H1 (cell line): ENCODE measurements at regions of chr15 and their contacts with region 1.

Region 1: DNA sequence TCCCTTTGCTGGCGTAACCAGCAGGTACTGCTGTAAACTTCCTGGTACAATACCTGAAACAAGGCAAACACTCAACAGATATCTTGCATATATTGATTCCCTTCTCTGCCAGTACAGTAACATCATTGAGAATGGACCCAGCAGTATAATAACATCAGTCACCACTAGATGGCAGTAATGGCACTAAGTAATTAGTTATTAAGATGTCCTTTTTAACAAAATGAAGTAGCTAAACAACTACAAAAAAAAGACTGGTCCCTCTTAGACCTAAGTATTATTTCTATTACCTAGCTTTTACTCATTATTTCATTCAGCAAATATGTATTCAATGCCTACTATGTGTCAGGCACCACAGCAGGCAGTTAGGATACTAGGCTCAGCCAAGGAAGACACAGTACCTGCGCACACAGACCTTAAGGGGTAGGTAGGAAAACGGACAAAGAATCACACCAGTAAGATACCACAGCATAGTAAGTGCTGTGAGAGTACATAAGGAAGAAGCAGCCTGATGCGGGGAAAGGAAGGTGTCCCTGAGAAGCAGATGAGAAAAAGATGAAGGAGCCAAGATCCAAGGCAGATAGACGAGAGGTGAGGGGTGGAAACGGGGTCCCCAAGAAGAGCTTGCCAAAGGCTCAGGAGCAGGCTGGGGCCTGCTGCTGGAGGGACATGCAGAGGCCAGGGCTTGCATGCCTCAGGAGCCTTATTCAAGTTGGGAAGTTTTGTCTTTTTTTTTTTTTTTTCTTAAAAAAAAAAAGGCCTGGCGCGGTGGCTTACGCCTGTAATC is 102.8 kb upstream of the CHD2 start:
- DNase-seq: no peak
- H3K4me3 ChIP-seq: no peak overlapping the region
- H3K27ac ChIP-seq: no peak overlapping the region
- H3K4me1 ChIP-seq: no peaks in the 10 kb centered on the region; a peak in 1 of 7 replicates
- H3K27me3 ChIP-seq: no peaks in the 10 kb centered on the region
- CTCF ChIP-seq: peak in 2 of 3 experiments; percentile 39 to 69; a peak in 2 of 4 replicates
- EP300 ChIP-seq: no peak
- POLR2A ChIP-seq: no peak
- RAD21 ChIP-seq: peak; percentile 59 to 62

Region 2: GRCh38 chr15:92429378-92430068 is 367.8 kb before region 1 on chr15:
- CTCF ChIA-PET with region 1: no interaction called
- POLR2A ChIA-PET with region 1: no interaction called
- DNase-seq: peak in 1 of 2 experiments; percentile 52
- H3K4me3 ChIP-seq: no peak overlapping the region
- H3K27ac ChIP-seq: no peak overlapping the region
- H3K4me1 ChIP-seq: peaks cover 0 to 12% (median 3%) of the 10 kb centered on the region in 4 experiments; a peak in 4 of 7 replicates
- H3K27me3 ChIP-seq: no peaks in the 10 kb centered on the region
- CTCF ChIP-seq: no peak
- EP300 ChIP-seq: no peak
- POLR2A ChIP-seq: no peak
- RAD21 ChIP-seq: no peak

Region 3: DNA sequence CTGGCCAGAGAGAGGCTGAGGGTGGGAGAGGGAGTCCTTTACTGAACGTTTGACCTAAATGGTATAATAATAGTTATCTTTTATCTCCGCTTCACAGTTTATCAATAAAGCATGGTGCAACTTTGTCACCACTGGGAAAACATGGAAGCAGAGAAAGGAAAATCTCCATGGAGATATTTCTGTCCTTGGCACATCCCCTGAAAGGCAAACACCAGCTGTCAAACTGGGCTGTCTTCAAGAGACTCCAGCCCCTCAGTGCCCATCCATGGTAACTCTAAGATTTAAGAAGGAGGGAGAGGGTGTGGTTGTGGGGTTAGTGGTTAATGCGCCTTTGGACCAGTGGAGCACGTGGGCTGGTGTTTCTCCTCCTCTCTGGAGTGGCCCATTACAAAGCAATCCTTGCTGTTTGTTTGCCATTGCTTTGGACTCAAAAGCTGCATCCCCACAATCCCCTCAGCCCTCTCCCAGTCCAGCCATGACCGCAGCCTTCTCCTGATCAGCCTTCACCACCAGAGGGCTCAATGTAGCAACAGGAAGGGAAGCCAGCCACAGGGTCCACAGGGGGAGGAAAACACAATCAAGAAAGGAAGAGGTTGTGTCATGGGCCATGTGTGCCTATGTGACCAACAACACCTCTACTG is 103.5 kb before region 1 on chr15:
- CTCF ChIA-PET with region 1: no interaction called
- POLR2A ChIA-PET with region 1: no interaction called
- DNase-seq: peak in 1 of 2 experiments; percentile 80
- H3K4me3 ChIP-seq: no peak overlapping the region
- H3K27ac ChIP-seq: no peak overlapping the region
- H3K4me1 ChIP-seq: no peaks in the 10 kb centered on the region
- H3K27me3 ChIP-seq: no peaks in the 10 kb centered on the region
- CTCF ChIP-seq: peak; percentile 79 to 86 (median 86)
- EP300 ChIP-seq: no peak
- POLR2A ChIP-seq: no peak
- RAD21 ChIP-seq: peak; percentile 69 to 82

Region 4: GRCh38 chr15:92714477-92715401 is 82.6 kb before region 1 on chr15:
- CTCF ChIA-PET with region 1: interaction called, 14 read pairs
- POLR2A ChIA-PET with region 1: no interaction called
- DNase-seq: peak in 1 of 2 experiments; percentile 92
- H3K4me3 ChIP-seq: peak overlapping the region; percentile 51 to 72 (median 62)
- H3K27ac ChIP-seq: no peak overlapping the region
- H3K4me1 ChIP-seq: peaks cover 0 to 5% (median 3%) of the 10 kb centered on the region in 4 experiments; a peak in 4 of 7 replicates
- H3K27me3 ChIP-seq: peaks cover 0 to 31% (median 14%) of the 10 kb centered on the region in 4 experiments; a peak in 6 of 7 replicates
- CTCF ChIP-seq: peak; percentile 52 to 83 (median 75)
- EP300 ChIP-seq: no peak
- POLR2A ChIP-seq: peak in 1 of 2 experiments; percentile 38; a peak in 2 of 3 replicates
- RAD21 ChIP-seq: peak; percentile 93 to 96

Region 5: GRCh38 chr15:92733934-92734521 is 63.3 kb before region 1 on chr15:
- CTCF ChIA-PET with region 1: no interaction called
- POLR2A ChIA-PET with region 1: no interaction called
- DNase-seq: no peak
- H3K4me3 ChIP-seq: peak overlapping the region in 1 of 4 experiments; percentile 52; a peak in 2 of 8 replicates
- H3K27ac ChIP-seq: no peak overlapping the region
- H3K4me1 ChIP-seq: no peaks in the 10 kb centered on the region
- H3K27me3 ChIP-seq: no peaks in the 10 kb centered on the region
- CTCF ChIP-seq: no peak
- EP300 ChIP-seq: no peak
- POLR2A ChIP-seq: no peak
- RAD21 ChIP-seq: no peak

Region 6: DNA sequence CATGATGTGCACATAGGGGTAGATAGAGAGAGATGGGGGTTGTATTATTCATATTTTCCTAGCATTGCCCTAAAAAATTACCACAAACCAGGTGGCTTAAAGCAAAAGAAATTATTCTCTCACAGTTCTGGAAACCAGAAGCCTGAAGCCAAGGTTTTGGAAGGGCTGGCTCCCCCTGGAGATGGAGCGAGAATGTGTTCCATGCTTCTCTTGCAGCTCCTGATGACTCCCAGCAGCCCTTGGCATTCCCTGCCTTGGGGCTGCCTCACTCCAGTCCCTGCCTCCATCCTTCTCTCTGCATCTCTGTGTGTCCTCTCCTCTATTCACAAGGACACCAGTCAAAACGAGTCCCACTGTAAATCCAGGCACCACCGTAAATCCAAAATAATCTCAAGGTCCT is 50.3 kb before region 1 on chr15:
- CTCF ChIA-PET with region 1: no interaction called
- POLR2A ChIA-PET with region 1: no interaction called
- DNase-seq: no peak
- H3K4me3 ChIP-seq: no peak overlapping the region
- H3K27ac ChIP-seq: no peak overlapping the region
- H3K4me1 ChIP-seq: peaks cover 5 to 9% (median 7%) of the 10 kb centered on the region in 4 experiments; a peak in 6 of 7 replicates
- H3K27me3 ChIP-seq: no peaks in the 10 kb centered on the region
- CTCF ChIP-seq: peak; percentile 10 to 29 (median 12); a peak in 3 of 4 replicates
- EP300 ChIP-seq: no peak
- POLR2A ChIP-seq: no peak
- RAD21 ChIP-seq: peak in 1 of 2 experiments; percentile 13; a peak in 1 of 4 replicates

Region 7: DNA sequence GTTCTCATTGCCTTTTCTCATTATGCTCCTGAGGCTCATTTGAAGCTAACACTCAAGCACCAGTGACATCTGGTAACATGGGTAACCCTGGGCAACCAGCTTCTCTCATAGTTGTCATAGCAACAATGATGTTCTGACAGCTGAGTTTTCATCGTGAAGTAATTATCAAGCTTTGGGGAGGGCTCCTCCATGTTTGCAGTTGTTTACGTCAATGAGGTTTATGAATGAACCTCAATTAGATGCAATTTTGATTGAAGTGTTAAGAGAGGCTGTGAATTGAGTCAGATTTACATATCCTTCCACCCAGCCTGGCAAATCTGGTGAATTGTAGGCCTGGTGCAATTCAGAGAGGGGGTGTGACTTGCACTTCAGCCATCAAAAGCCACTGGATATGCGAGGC is 16.5 kb before region 1 on chr15:
- CTCF ChIA-PET with region 1: interaction called, 29 read pairs
- POLR2A ChIA-PET with region 1: interaction called, 6 read pairs
- DNase-seq: no peak
- H3K4me3 ChIP-seq: no peak overlapping the region
- H3K27ac ChIP-seq: no peak overlapping the region
- H3K4me1 ChIP-seq: no peaks in the 10 kb centered on the region
- H3K27me3 ChIP-seq: no peaks in the 10 kb centered on the region
- CTCF ChIP-seq: no peak
- EP300 ChIP-seq: no peak
- POLR2A ChIP-seq: no peak
- RAD21 ChIP-seq: no peak

Region 8: GRCh38 chr15:92831655-92832328 is 34.4 kb after region 1 on chr15:
- CTCF ChIA-PET with region 1: interaction called, 12 read pairs
- POLR2A ChIA-PET with region 1: interaction called, 5 read pairs
- DNase-seq: peak; percentile 80 to 90
- H3K4me3 ChIP-seq: peak overlapping the region in 1 of 4 experiments; percentile 41; a peak in 1 of 8 replicates
- H3K27ac ChIP-seq: peak overlapping the region; percentile 73
- H3K4me1 ChIP-seq: peaks cover 3 to 15% (median 11%) of the 10 kb centered on the region in 4 experiments; a peak in 6 of 7 replicates
- H3K27me3 ChIP-seq: no peaks in the 10 kb centered on the region
- CTCF ChIP-seq: no peak
- EP300 ChIP-seq: peak in 1 of 2 experiments; percentile 62; a peak in 1 of 3 replicates
- POLR2A ChIP-seq: peak; percentile 67 to 90
- RAD21 ChIP-seq: peak; percentile 36 to 42

Region 9: DNA sequence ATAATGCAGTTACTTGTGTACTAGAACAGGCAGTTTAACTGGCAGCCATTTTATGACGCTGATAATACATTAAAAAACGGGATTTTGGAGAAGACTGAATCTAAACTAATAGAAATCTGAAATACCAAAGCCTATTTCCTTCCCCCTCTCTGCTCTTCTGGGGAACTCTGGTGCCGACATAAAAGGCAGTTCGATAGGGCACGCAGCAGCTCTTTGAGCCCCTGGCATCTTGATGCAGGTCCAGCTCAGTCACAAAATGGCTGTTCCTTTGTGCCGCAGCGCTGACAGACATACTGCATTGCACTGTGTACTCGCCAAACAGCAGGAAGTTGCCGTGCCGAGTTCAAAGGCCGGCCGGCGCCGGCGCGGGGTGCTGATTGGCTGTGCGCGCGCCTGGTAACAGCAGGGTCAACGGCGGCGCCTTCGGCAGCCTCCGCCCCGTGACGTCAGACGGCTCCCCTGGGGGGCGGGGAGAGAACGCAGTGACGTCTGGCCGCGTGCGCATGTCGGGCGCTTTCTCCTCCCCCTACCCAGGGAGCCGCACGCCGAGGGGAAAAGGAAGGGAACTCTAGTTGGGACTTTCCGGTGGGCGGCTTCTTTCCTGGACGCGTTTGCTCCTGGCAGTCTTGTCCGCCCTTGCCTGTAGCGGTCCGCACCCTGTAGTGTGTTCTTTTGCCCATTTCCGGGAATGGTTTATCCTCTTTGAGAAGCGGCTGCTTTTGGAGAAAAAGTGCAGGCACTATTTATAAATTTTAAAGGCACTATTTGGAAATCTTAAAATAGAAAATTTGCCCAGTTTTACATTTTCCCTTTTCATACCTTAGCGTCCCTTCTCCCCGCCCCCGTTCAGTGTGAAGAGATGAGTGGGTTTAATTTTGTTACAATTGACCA is 106.8 kb after region 1 on chr15:
- CTCF ChIA-PET with region 1: interaction called, 30 read pairs
- POLR2A ChIA-PET with region 1: interaction called, 20 read pairs
- DNase-seq: peak; percentile 98 to 99
- H3K4me3 ChIP-seq: peak overlapping the region; percentile 50 to 97 (median 88)
- H3K27ac ChIP-seq: peak overlapping the region; percentile 98
- H3K4me1 ChIP-seq: peaks cover 0 to 16% (median 4%) of the 10 kb centered on the region in 4 experiments; a peak in 5 of 7 replicates
- H3K27me3 ChIP-seq: no peaks in the 10 kb centered on the region
- CTCF ChIP-seq: no peak
- EP300 ChIP-seq: peak; percentile 10 to 38; a peak in 2 of 3 replicates
- POLR2A ChIP-seq: peak; percentile 98 to 99
- RAD21 ChIP-seq: no peak

Region 10: DNA sequence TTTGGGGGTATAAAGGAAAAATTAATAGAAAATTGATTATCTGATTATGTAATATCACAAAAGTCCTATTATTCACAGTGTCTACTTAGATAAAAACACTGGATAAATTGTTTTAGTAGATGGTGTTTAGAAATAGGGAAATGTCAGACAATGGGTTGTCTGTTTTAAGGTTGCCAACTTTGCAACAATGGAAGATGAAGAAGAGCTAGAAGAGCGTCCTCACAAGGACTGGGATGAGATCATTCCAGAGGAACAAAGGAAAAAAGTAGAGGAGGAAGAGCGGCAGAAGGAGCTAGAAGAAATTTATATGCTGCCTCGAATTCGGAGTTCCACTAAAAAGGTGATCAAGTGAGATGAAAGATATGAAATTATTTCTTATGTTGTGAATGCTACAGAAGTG is 186.8 kb after region 1 on chr15:
- CTCF ChIA-PET with region 1: interaction called, 10 read pairs
- POLR2A ChIA-PET with region 1: no interaction called
- DNase-seq: no peak
- H3K4me3 ChIP-seq: no peak overlapping the region
- H3K27ac ChIP-seq: no peak overlapping the region
- H3K4me1 ChIP-seq: no peaks in the 10 kb centered on the region
- H3K27me3 ChIP-seq: no peaks in the 10 kb centered on the region
- CTCF ChIP-seq: no peak
- EP300 ChIP-seq: no peak
- POLR2A ChIP-seq: no peak
- RAD21 ChIP-seq: no peak